ENCODE measurements at regions of chr13 and their contacts with region 1.

Region 1: DNA sequence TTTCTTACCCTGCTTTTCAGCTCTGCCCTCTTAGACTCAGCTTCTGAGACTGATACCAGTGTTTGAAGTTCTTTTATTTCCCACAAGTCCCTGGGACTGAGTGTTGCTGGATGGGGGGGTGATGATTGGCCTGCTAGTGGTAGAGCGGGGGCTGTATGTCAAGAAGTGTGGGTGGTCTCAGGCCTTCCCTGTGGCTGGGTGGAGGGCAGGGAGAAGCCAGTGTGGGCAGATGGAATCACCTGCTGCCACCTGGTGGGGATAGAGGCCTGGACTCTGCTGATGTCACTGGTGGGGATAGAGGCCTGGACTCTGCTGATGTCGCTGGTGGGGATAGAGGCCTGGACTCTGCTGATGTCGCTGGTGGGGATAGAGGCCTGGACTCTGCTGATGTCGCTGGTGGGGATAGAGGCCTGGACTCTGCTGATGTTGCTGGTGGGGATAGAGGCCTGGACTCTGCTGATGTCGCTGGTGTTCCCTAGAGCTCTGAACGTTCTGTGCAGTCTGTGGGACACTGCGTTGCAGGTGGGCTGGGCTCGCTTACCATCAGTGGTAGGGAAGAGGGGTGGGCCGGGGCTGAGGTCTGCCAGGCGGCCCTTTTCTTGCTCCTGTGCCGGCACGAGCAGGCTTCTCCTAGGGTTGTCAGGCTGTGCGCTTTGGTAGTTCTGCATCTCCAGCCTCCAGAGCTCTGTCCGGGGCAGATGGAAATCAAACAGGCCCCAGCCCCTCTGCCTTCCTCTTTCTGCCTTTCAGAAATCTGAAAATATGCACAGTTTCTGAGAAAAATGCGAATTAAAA is 101.3 kb downstream of the ARHGEF7 start:
- DNase-seq: no peak
- H3K4me3 ChIP-seq: no peak overlapping the region
- H3K27ac ChIP-seq: peak overlapping the region in 3 of 4 donors; percentile 2 to 23 (median 19)
- H3K4me1 ChIP-seq: peaks cover 62 to 89% (median 73%) of the 10 kb centered on the region in 4 donors
- H3K27me3 ChIP-seq: no peaks in the 10 kb centered on the region
- CTCF ChIP-seq: peak; percentile 17 to 49 (median 18)
- EP300 ChIP-seq: no peak
- POLR2A ChIP-seq: no peak

Region 2: GRCh38 chr13:111066544-111066943 is 149.8 kb before region 1 on chr13:
- intact Hi-C with region 1: loop called (anchors 5 kb)
- DNase-seq: peak; percentile 57
- H3K4me3 ChIP-seq: peak overlapping the region in 3 of 4 donors; percentile 58 to 64 (median 63)
- H3K27ac ChIP-seq: peak overlapping the region in 1 of 4 donors; percentile 33
- H3K4me1 ChIP-seq: peaks cover 0 to 16% (median 10%) of the 10 kb centered on the region in 4 donors
- H3K27me3 ChIP-seq: peaks cover 0 to 20% (median 0%) of the 10 kb centered on the region in 4 donors
- CTCF ChIP-seq: no peak
- EP300 ChIP-seq: no peak
- POLR2A ChIP-seq: no peak

Region 3: GRCh38 chr13:111153279-111153976 is 62.9 kb before region 1 on chr13:
- intact Hi-C with region 1: loop called (anchors 5 kb)
- DNase-seq: peak; percentile 98
- H3K4me3 ChIP-seq: peak overlapping the region; percentile 80 to 93 (median 88)
- H3K27ac ChIP-seq: peak overlapping the region; percentile 94 to 97 (median 96)
- H3K4me1 ChIP-seq: peaks cover 35 to 52% (median 51%) of the 10 kb centered on the region in 4 donors
- H3K27me3 ChIP-seq: no peaks in the 10 kb centered on the region
- CTCF ChIP-seq: peak in 2 of 3 experiments; percentile 1 to 4
- EP300 ChIP-seq: no peak
- POLR2A ChIP-seq: peak; percentile 90

Region 4: GRCh38 chr13:111296417-111296816 is 80.1 kb after region 1 on chr13:
- intact Hi-C with region 1: no loop called
- DNase-seq: no peak
- H3K4me3 ChIP-seq: no peak overlapping the region
- H3K27ac ChIP-seq: no peak overlapping the region
- H3K4me1 ChIP-seq: no peaks in the 10 kb centered on the region
- H3K27me3 ChIP-seq: no peaks in the 10 kb centered on the region
- CTCF ChIP-seq: no peak
- EP300 ChIP-seq: no peak
- POLR2A ChIP-seq: no peak